ENCODE measurements at regions of chrX and their contacts with region 1.

Region 1: DNA sequence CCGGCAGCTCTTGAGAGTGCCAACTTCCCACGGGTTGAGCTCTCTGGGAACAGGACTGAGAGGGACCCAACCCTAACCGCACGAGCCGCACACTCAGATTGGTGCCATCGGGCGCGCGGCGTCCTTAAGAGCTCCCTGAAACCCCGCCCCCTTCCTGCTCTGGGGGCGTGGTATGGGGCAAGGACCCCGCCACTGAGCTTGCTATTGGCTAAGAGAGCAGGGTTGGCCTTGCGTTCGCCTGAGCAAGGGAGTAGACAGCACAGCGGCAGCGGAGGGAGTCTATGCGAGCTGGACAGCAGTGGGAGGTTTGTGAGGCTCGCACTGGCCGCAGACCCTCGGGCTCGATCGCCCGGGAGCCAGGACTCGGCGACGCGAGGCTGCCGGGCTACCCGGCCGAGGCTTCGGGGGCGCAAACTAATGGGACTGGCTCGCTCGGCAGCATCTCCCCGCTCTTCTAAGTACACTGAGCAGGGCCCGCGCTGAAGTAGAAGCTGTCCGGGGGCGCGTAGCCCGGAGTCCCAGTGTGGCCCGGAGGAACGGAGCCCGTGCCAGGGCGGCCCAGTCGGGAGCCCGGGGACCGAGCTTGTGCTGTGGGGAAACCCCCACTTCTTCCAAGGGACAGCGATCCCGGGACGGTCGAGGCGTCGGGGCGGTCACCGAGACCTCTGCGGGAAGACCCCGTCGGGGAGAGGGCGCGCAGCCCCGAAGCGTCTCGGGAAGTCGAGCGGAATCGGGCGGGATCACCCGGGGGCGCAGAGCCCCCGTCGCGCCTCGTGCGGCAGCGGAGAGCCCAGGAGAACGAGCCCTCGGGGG is at the start of gene EFNB1:
- DNase-seq: peak; percentile 97
- H3K4me3 ChIP-seq: peak within 1 kb of the TSS; percentile 44 to 77 (median 72)
- H3K27ac ChIP-seq: peak within 1 kb of the TSS; percentile 75 to 89 (median 87)
- H3K4me1 ChIP-seq: peaks cover 0 to 20% (median 13%) of the 10 kb centered on the region in 4 donors
- H3K27me3 ChIP-seq: no peaks in the 10 kb centered on the region
- CTCF ChIP-seq: no peak
- EP300 ChIP-seq: no peak
- POLR2A ChIP-seq: peak; percentile 77 to 92
- total RNA-seq, gene EFNB1: 9.5 to 18.6 (median 14.6) TPM

Region 2: GRCh38 chrX:68894513-68895340 is 65.8 kb after region 1 on chrX:
- intact Hi-C with region 1: loop called (anchors 2 kb)
- DNase-seq: peak; percentile 85
- H3K4me3 ChIP-seq: peak overlapping the region in 3 of 4 donors; percentile 16 to 30 (median 17)
- H3K27ac ChIP-seq: peak overlapping the region; percentile 85 to 90 (median 86)
- H3K4me1 ChIP-seq: peaks cover 0 to 37% (median 23%) of the 10 kb centered on the region in 4 donors
- H3K27me3 ChIP-seq: no peaks in the 10 kb centered on the region
- CTCF ChIP-seq: no peak
- EP300 ChIP-seq: no peak
- POLR2A ChIP-seq: no peak

Region 3: GRCh38 chrX:68989865-68990606 is 161.1 kb after region 1 on chrX:
- intact Hi-C with region 1: loop called (anchors 2 kb)
- DNase-seq: no peak
- H3K4me3 ChIP-seq: no peak overlapping the region
- H3K27ac ChIP-seq: peak overlapping the region; percentile 56 to 69 (median 66)
- H3K4me1 ChIP-seq: peaks cover 0 to 15% (median 11%) of the 10 kb centered on the region in 4 donors
- H3K27me3 ChIP-seq: no peaks in the 10 kb centered on the region
- CTCF ChIP-seq: no peak
- EP300 ChIP-seq: no peak
- POLR2A ChIP-seq: no peak

Region 4: GRCh38 chrX:69060631-69061408 is 231.9 kb after region 1 on chrX:
- intact Hi-C with region 1: loop called (anchors 1 kb)
- DNase-seq: no peak
- H3K4me3 ChIP-seq: no peak overlapping the region
- H3K27ac ChIP-seq: no peak overlapping the region
- H3K4me1 ChIP-seq: no peaks in the 10 kb centered on the region
- H3K27me3 ChIP-seq: no peaks in the 10 kb centered on the region
- CTCF ChIP-seq: peak in 3 of 4 experiments; percentile 29 to 37 (median 32)
- EP300 ChIP-seq: no peak
- POLR2A ChIP-seq: no peak

Region 5: GRCh38 chrX:69165087-69165651 is 336.2 kb after region 1 on chrX and contains the start of gene PJA1:
- intact Hi-C with region 1: loop called (anchors 2 kb)
- DNase-seq: peak; percentile 87
- H3K4me3 ChIP-seq: peak within 1 kb of the TSS; percentile 64 to 70 (median 68)
- H3K27ac ChIP-seq: peak within 1 kb of the TSS; percentile 80 to 83 (median 82)
- H3K4me1 ChIP-seq: peaks cover 0 to 11% (median 2%) of the 10 kb centered on the region in 4 donors
- H3K27me3 ChIP-seq: no peaks in the 10 kb centered on the region
- CTCF ChIP-seq: no peak
- EP300 ChIP-seq: no peak
- POLR2A ChIP-seq: peak; percentile 55 to 65
- total RNA-seq, gene PJA1: 17.0 to 21.8 (median 19.1) TPM

Region 6: DNA sequence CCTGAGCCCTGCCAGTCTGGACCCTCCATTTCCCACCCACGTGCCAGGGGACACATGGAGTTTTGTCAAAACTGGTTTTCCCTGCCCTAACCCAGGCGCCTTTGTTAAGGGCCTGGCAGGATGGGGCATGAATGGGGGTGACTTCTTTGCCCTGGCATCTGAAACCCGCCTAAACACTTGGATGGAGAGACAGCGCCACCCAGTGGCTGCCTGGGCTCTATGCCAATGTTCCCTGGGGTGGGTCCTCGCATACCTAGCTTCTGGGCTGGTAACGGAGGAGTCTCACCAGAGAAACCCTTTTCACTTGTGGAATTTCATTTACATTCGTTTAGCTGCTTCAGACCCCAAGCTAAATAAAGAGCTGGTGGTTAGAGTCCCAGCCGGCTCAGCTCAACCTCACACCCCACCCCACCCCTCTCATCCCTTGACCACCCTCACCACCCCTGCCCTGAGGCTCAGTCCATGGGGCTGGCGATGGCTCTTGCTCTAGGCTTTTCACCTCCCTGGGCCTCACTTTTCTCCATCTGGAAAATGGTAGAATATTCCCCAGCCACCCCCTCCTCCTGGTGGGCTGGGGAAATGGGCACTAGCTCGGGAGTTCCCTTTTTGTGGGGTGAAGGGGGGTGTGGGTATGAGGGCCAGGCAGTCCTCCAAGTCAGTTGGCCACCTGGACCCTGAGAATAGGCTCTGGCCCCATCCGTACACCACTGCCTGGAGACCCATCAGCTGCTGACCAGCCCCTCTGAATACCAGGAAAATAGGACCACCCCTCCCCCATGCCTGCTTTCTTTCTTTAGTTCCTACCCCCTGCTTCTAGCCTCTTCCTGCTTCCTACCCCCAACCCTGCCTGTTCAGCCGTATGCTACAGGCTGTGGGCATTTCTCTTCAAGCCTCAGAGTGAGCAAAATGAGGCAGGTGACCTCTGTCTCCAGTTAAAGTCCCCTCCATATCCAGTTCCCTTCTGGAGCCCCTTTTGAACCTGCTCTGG is 393.5 kb after region 1 on chrX:
- intact Hi-C with region 1: loop called (anchors 2 kb)
- DNase-seq: peak; percentile 83
- H3K4me3 ChIP-seq: no peak overlapping the region
- H3K27ac ChIP-seq: no peak overlapping the region
- H3K4me1 ChIP-seq: peaks cover 0 to 9% (median 0%) of the 10 kb centered on the region in 4 donors
- H3K27me3 ChIP-seq: peaks cover 0 to 6% (median 0%) of the 10 kb centered on the region in 3 donors
- CTCF ChIP-seq: peak; percentile 48 to 76 (median 66)
- EP300 ChIP-seq: no peak
- POLR2A ChIP-seq: no peak

Region 7: GRCh38 chrX:69285881-69286564 is 457.1 kb after region 1 on chrX:
- intact Hi-C with region 1: loop called (anchors 2 kb)
- DNase-seq: peak; percentile 85
- H3K4me3 ChIP-seq: peak overlapping the region; percentile 13 to 50 (median 45)
- H3K27ac ChIP-seq: peak overlapping the region; percentile 57 to 73 (median 68)
- H3K4me1 ChIP-seq: peaks cover 0 to 22% (median 15%) of the 10 kb centered on the region in 4 donors
- H3K27me3 ChIP-seq: peaks cover 0 to 2% (median 0%) of the 10 kb centered on the region in 3 donors
- CTCF ChIP-seq: peak; percentile 74 to 86 (median 82)
- EP300 ChIP-seq: no peak
- POLR2A ChIP-seq: no peak